Adrenal gland (tissue), 19 donors: ENCODE measurements at regions of chr3 and their contacts with region 1.

Region 1: DNA sequence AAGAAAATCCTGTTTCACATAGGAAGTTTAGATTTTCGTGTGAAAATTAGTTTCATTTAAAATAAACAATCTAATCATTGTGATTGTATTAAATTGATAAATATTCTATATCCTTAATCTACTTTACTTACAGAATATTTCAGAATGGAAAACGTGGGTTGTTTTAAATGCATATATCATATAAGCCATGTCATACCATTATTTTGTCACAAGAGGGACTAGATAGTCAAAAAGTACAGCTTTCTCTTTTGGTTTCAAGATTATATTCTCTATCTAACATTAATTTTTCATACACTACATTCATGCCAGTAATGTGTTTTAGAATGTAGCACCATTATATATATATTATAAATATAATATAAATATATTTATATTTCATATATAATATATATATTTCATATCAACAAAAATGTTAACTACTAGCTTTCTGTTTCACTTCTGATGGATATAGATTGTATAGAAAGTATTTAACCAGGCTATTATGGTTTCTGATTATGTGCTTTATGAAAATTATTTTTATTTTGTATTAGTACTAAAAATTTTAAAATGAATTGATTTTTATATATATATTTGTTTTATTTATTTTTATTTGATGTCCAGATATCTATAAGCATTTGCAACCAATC is 45.3 kb downstream of the OSTN start:
- DNase-seq: no peak
- H3K4me3 ChIP-seq: no peak overlapping the region
- H3K27ac ChIP-seq: no peak overlapping the region
- H3K4me1 ChIP-seq: no peaks in the 10 kb centered on the region
- H3K27me3 ChIP-seq: no peaks in the 10 kb centered on the region
- CTCF ChIP-seq: peak; percentile 23 to 60 (median 44)
- POLR2A ChIP-seq: no peak

Region 2: DNA sequence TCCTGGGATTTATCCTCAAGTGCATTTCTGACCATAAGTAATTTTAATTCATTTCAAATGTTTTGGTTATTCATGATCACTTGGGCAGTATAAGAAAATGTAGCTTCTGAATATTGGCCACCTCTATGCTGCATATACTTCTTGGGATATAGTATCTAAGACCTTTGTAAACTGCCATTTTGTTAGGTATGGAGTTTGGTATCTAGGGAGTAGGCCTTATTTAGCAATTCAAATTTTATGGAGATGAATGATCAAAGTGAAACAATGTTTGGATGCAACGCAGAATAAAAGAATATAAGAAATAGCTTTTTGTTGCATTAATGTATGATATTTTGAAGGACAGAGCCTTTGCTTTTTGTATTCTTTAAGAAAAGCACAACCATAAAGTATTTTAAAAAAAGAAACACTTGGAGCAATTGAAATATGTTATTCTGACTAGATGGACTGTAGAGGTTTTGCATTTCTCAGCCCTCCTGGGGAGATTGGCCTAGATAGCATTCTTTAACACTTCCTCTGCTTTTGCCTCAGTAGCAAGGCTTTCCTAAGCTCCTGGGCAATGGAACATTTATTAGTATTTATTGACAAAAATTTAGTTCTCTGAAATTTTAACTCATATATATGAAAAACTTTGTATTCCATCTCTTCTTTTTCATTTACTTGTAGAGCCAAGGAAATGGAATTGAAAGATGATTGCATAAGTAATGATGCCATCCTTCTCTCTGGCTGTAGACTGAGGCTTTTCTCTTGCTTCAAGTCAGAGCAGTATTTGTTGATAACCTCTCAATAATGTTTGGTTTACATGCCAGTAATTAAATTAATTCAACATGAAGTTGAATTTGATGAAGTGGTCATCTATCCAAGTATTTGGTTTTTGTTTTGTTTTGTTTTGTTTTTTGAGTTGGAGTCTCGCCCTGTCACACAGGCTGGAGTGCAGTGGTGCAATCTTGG is 147.8 kb after region 1 on chr3:
- intact Hi-C with region 1: loop called in 1 of 2 experiments (anchors 10 kb)
- DNase-seq: no peak
- H3K4me3 ChIP-seq: no peak overlapping the region
- H3K27ac ChIP-seq: no peak overlapping the region
- H3K4me1 ChIP-seq: peaks cover 0 to 26% of the 10 kb centered on the region in 2 donors
- H3K27me3 ChIP-seq: no peaks in the 10 kb centered on the region
- CTCF ChIP-seq: no peak
- POLR2A ChIP-seq: no peak